Prostate gland (tissue), 2 donors: ENCODE measurements at regions of chr3 and their contacts with region 1.

Region 1: DNA sequence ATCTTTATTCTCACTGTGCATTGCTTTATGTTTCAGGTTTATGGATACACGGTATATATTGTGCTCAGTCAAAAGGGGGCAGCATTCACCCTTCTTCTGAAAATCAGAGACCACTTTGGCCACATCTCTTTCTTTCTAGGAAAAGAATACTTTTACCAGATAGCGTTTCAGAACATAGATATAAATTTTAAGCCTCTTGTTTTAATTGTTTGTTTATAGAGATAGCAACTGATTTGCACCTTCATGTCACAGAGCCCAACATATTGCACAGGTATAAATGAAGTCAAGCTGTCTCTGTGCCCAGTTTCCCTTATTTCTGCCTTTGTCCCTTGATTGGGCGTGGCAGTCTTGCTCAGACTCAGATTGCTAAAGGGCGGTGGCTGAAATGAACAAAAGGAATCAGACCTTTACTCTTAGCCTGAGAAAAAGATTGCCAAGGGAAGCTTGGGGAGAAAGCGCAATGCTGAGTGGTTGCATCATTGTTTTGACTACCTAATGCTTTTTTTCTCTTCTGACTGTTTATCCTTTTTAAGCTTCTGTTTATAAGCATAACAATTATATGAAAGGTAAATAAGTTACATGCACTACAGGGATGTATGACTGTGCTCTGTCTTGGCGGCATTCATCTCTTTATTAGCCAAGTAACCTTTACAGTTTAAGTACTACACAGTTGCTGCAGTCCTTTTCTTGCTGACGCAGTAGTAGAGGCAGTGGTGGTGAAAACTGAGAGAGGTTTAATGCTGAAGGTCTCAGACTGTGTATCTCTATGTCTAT is 70.8 kb upstream of the ZBTB20 start:
- DNase-seq: no peak
- H3K4me3 ChIP-seq: no peak overlapping the region
- H3K27ac ChIP-seq: no peak overlapping the region
- H3K4me1 ChIP-seq: no peaks in the 10 kb centered on the region
- H3K27me3 ChIP-seq: no peaks in the 10 kb centered on the region
- CTCF ChIP-seq: peak in 3 of 4 experiments; percentile 38 to 58 (median 57)
- POLR2A ChIP-seq: no peak

Region 2: GRCh38 chr3:115272036-115272824 is 54.4 kb after region 1 on chr3:
- intact Hi-C with region 1: no loop called
- DNase-seq: no peak
- H3K4me3 ChIP-seq: no peak overlapping the region
- H3K27ac ChIP-seq: no peak overlapping the region
- H3K4me1 ChIP-seq: no peaks in the 10 kb centered on the region
- H3K27me3 ChIP-seq: no peaks in the 10 kb centered on the region
- CTCF ChIP-seq: no peak
- POLR2A ChIP-seq: no peak

Region 3: GRCh38 chr3:115512565-115513415 is 294.9 kb after region 1 on chr3:
- intact Hi-C with region 1: loop called (anchors 10 kb)
- DNase-seq: no peak
- H3K4me3 ChIP-seq: peak overlapping the region; percentile 24 to 25
- H3K27ac ChIP-seq: no peak overlapping the region
- H3K4me1 ChIP-seq: no peaks in the 10 kb centered on the region
- H3K27me3 ChIP-seq: no peaks in the 10 kb centered on the region
- CTCF ChIP-seq: no peak
- POLR2A ChIP-seq: no peak

Region 4: DNA sequence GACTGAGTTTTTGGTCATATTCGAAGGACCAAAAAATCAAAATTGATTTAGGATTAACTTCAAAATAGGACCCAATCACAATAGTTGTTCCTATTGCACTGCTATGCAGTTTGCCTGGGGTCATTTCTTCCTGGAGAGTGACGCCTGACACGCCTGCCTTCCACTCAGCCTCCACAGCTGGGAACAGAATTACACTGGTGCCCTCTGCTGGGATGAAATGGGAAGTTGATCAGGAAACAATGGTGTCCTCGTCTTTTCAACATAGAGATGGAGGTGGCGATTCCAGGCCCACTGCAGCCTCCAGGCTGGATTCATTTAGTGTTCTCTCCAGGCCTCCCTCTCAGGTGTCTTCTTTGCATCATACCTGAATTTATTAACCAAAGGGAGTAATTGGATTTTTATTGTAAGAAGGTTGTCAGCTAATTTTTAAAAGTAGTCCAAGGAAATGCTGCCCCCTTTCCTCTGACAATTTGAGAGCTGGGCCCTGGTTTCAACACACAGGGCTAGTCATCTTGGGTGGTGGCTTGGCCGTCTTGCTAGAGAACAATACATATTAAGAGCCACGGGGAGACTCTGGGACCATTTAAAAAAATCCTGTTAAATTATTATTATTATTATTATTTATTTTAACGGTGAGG is 475.1 kb after region 1 on chr3:
- intact Hi-C with region 1: loop called (anchors 5 kb)
- DNase-seq: peak; percentile 54
- H3K4me3 ChIP-seq: no peak overlapping the region
- H3K27ac ChIP-seq: no peak overlapping the region
- H3K4me1 ChIP-seq: no peaks in the 10 kb centered on the region
- H3K27me3 ChIP-seq: no peaks in the 10 kb centered on the region
- CTCF ChIP-seq: peak; percentile 47 to 75 (median 68)
- POLR2A ChIP-seq: no peak

Region 5: GRCh38 chr3:115783938-115784738 is 566.3 kb after region 1 on chr3:
- intact Hi-C with region 1: loop called (anchors 2 kb)
- DNase-seq: peak; percentile 83
- H3K4me3 ChIP-seq: peak overlapping the region; percentile 62 to 70
- H3K27ac ChIP-seq: peak overlapping the region; percentile 87 to 91
- H3K4me1 ChIP-seq: no peaks in the 10 kb centered on the region
- H3K27me3 ChIP-seq: no peaks in the 10 kb centered on the region
- CTCF ChIP-seq: peak; percentile 94 to 98 (median 95)
- POLR2A ChIP-seq: peak; percentile 41